ENCODE measurements at regions of chr17 and their contacts with region 1.

Region 1: DNA sequence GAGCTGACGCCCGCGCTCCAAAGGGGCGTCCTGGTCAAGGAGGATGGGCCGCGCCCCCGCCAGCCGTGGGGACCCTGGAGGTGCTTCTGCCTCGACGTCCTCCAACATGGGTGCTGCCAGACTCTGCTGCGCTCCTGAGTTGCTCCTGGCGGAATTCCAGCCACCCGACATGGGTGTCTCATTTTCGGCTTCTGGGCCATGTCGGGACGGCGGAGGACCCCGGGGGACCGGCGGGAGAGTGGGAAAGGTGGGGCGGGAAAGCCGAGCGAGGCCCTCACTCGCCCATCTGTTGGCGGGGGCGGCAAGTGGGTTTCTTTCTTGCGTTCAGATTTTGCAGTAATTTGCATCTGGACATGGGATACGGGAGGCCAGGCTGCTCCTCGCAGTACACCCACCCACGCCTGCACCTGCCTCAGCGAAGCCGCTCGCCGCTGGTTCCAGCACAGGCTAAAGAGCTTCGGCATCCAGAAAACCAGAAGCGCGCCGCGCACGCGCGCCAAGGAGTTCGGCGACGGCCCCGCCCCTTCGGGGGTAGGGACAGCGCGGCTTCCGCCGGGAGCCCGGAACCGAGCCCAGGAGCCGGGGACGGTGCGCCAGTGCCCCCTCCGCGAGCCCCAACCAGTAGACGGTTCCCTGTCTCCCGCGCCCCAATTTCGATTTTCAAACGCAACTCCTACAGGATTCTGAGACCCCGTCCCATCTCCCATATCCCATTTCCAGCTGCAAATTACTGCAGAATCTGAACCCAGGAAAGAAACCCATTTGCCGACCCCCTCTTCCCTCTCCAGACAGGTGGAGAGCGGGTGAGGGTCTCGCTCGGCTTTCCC is at the start of gene ARMC7:
- DNase-seq: peak; percentile 92
- ATAC-seq: peak; percentile 86
- H3K4me3 Mint-ChIP-seq: peak within 1 kb of the TSS; percentile 92
- H3K27ac Mint-ChIP-seq: peak within 1 kb of the TSS; percentile 87
- H3K4me1 Mint-ChIP-seq: peaks cover 48% of the 10 kb centered on the region
- H3K27me3 Mint-ChIP-seq: no peaks in the 10 kb centered on the region
- total RNA-seq, gene ARMC7: 16.1 to 17.0 TPM

Region 2: DNA sequence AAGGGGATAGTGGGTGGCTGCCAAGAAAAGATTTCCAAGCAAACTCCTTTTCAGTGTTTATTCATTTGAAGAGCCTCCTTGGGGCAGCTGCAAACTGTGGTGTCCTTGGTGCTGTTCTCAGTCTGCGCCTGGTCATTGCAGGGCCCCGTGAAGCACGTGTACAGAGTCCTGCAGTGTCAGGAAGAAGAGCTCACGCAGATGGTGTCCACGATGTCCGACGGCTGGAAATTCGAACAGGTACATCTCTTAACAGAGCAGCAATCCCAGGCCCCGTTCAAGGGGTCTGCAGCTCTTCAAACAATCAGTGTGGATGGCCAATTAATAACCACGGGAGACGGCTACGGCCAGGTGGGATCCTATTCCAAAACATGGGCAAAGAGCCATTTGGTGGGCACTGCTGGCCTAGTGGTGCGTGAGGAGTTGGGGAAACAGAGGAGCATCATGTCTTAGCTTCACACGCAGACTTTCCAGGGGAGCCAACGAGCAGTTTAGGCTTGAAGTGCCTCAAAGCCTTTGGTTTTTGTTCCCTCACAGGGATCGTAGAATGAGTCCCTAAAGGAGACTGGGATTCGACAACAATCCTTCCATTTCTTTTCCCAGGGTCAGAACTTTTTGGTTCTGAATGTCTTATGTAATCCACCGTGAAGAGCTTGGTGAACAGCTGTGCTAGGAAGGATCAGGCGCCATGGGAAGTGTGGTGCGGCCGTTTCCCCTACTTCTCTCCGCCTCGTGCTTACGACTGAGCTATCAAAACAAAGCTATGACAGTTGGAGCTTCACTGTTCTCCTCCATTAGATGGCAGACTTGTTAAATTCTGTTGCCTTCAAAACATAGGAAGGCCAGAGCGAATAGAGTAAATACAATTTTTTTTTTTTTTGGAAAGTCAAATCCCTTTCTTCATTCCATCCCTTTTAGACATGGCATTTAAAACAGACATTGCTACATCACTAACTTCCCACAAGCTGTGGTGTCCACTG is 50.0 kb before region 1 on chr17:
- CTCF ChIA-PET with region 1: interaction called, 25 read pairs
- POLR2A ChIA-PET with region 1: interaction called, 3 read pairs
- DNase-seq: no peak
- ATAC-seq: no peak
- H3K4me3 Mint-ChIP-seq: no peak overlapping the region
- H3K27ac Mint-ChIP-seq: no peak overlapping the region
- H3K4me1 Mint-ChIP-seq: peaks cover 18% of the 10 kb centered on the region
- H3K27me3 Mint-ChIP-seq: no peaks in the 10 kb centered on the region

Region 3: DNA sequence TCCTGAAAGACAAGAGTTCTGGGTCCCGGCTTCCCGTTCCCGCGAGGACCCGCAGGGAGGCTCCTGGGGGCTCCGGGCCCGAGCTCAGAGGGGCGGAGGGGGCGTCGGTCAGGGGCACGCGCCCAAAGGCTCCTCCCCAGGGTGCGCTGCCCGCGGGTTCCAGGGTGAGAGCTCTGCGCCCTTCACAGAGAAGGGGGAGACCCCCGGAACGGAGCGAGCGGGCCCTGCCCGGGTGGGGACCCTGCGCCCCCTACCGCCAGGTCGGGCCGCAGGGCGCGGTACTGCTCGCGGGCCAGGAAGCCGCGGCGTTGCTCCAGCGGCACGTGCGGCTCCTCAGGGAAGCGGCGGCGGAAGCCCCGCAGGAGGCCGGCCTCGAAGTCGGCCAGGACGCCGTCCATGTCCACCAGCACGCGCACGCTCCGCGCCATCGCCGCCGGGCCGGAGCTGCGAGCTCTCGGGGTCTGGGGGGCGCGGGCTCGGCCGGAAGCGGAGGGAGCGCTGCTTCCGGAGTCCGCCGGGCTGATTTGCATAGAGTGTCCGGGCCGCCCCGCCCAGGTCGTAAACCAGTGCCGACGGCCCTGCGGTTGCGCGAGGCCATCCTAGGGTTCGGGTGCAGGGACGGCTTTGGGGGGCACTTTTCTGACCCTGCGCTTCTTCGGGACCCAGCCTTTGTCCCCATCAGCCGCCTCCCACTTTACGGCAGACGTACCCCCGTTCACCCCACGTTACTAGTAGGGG is 21.8 kb after region 1 on chr17 and contains the start of gene NT5C:
- CTCF ChIA-PET with region 1: interaction called, 115 read pairs
- POLR2A ChIA-PET with region 1: interaction called, 28 read pairs
- DNase-seq: peak; percentile 77
- ATAC-seq: peak; percentile 78
- H3K4me3 Mint-ChIP-seq: peak within 1 kb of the TSS; percentile 87
- H3K27ac Mint-ChIP-seq: peak within 1 kb of the TSS; percentile 88
- H3K4me1 Mint-ChIP-seq: peaks cover 27% of the 10 kb centered on the region
- H3K27me3 Mint-ChIP-seq: no peaks in the 10 kb centered on the region
- total RNA-seq, gene NT5C: 68.5 to 68.8 TPM

Region 4: GRCh38 chr17:75173526-75173925 is 63.9 kb after region 1 on chr17:
- CTCF ChIA-PET with region 1: interaction called, 125 read pairs
- POLR2A ChIA-PET with region 1: interaction called, 7 read pairs
- DNase-seq: no peak
- ATAC-seq: no peak
- H3K4me3 Mint-ChIP-seq: no peak overlapping the region
- H3K27ac Mint-ChIP-seq: peak overlapping the region; percentile 28
- H3K4me1 Mint-ChIP-seq: peaks cover 21% of the 10 kb centered on the region
- H3K27me3 Mint-ChIP-seq: no peaks in the 10 kb centered on the region

Region 5: DNA sequence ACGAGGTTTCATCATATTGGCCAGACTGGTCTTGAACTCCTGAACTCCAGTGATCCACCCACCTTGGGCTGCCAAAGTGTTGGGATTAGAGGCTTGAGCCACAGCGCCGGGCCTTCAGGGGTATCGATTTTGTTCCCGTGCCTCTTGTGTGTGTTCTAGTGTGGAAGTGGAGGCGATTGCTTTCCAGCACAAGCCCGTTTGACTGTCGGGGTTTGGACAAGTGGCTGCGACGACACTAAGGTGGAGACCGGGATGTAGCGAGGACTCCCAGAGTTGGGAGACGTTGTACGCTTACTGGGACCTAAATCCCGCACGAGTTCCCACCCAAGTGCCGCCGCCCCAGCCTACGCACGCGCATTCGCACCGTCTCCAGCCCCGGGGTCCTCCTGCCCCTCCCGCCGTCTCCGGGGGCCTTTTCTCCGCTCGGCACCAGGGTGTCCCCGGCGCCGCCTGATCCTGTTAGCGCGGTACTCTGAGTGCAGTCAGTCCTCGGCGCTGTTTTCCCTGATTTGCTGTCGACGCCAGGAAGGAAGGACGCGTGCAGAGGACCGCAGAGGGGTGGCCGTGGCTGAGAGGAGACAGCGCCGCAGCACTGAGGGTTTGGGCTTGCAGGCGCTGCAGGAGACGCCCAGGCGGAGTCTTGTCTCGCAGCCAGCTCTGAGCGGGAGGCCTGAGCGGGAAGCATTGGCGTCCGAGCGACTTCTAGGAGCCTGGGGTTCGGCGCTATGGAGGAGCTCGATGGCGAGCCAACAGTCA is 95.6 kb after region 1 on chr17 and contains the start of gene NUP85:
- CTCF ChIA-PET with region 1: interaction called, 210 read pairs
- POLR2A ChIA-PET with region 1: interaction called, 8 read pairs
- DNase-seq: peak; percentile 94
- ATAC-seq: peak; percentile 87
- H3K4me3 Mint-ChIP-seq: peak within 1 kb of the TSS; percentile 97
- H3K27ac Mint-ChIP-seq: peak within 1 kb of the TSS; percentile 100
- H3K4me1 Mint-ChIP-seq: peaks cover 35% of the 10 kb centered on the region
- H3K27me3 Mint-ChIP-seq: no peaks in the 10 kb centered on the region
- total RNA-seq, gene NUP85: 135 TPM

Region 6: DNA sequence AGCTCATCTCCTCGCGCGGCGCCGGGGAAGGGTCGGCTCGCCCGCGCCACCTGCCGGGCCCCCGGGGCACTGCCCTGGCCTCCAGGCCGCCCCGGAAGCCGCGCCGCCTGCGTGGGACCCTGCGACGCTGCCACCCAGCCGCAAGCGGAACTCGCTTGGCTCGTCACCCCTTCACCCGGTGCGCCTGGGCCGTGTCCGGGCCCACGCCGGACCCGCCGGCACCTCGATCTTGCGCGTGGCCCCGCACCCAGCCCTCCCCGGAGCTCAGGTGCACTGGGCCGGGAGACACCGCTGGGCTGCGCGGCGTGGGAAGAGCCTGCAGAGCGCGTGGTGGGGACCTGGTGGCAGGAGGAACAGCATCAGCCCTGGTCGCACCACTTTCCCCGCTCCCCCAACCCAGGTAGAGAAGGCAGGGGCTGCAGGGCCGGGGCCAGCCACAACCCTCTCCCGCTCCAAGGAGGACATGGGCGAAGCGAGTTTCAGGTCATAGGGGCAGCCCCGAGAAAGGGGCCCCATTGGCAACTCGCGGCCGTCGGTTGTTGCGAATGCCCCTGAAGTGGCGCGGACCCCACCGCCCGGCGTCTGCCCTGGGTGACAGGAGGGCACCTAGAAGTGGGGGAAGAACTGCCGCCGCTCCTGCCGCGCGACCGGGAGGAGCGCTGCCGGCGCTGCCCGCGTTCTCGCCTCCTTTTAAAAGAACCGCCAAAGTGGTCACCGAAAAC is 161.8 kb after region 1 on chr17:
- CTCF ChIA-PET with region 1: interaction called, 11 read pairs
- POLR2A ChIA-PET with region 1: interaction called, 6 read pairs
- DNase-seq: peak; percentile 89
- ATAC-seq: peak; percentile 85
- H3K4me3 Mint-ChIP-seq: peak overlapping the region; percentile 81
- H3K27ac Mint-ChIP-seq: peak overlapping the region; percentile 86
- H3K4me1 Mint-ChIP-seq: peaks cover 36% of the 10 kb centered on the region
- H3K27me3 Mint-ChIP-seq: no peaks in the 10 kb centered on the region

Measured in activated CD8-positive, alpha-beta T cell treated with anti-CD3 and anti-CD28 coated beads, Interleukin-2, amount 10 ng/mL, durations not matched to agents 7 days and 5 days (primary cell).